Activated CD4-positive, alpha-beta T cell treated with anti-CD3 and anti-CD28 coated beads, Interleukin-2, amount 10 ng/mL, durations not matched to agents 24 days and 14 days (primary cell): ENCODE measurements at regions of chr12 and their contacts with region 1.

Region 1: DNA sequence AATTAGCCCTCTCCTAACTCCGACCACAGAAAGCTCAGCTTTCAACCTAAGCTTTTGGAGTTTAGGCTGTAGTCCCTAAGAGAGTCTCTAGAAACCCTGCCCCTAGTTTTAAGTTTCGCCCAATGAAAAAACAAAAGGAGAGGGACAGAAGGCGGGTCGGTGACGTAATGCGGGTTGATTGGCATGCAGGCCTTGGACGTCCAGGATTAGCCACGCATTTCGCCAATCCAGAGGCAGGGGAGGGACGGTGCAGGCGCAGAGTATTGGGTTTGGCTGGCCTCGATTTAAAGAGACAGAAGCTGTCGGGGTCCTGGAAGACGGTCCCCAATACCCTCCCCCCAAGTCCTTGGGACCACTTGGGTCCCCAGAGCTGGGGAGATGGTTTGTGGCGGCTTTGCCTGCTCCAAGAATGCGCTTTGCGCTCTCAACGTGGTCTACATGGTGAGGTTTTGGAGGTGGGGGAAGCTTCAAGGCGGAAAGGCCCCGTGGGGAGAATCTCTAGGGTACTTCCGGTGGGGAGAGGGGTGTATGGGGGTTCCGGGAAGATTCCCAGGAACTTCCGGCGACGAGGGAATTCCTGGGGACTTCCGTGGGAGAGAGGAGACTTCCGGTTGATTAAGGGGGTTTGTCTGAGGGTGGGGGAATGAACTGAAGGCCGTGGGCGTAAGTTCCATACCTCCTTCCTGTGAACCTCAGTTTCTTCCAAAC is at the start of gene TSPAN31:
- DNase-seq: peak; percentile 98
- H3K4me3 Mint-ChIP-seq: peak within 1 kb of the TSS; percentile 94
- H3K27ac Mint-ChIP-seq: peak within 1 kb of the TSS; percentile 90
- H3K4me1 Mint-ChIP-seq: peaks cover 45% of the 10 kb centered on the region
- H3K27me3 Mint-ChIP-seq: no peaks in the 10 kb centered on the region
- total RNA-seq, gene TSPAN31: 19.2 and 19.4 TPM in 2 replicates

Region 2: GRCh38 chr12:57069523-57069922 is 675.4 kb before region 1 on chr12:
- intact Hi-C with region 1: loop called (anchors 10 kb)
- DNase-seq: peak; percentile 90
- H3K4me3 Mint-ChIP-seq: peak overlapping the region; percentile 61
- H3K27ac Mint-ChIP-seq: peak overlapping the region; percentile 89
- H3K4me1 Mint-ChIP-seq: peaks cover 45% of the 10 kb centered on the region
- H3K27me3 Mint-ChIP-seq: no peaks in the 10 kb centered on the region

Region 3: GRCh38 chr12:57476162-57476992 is 268.6 kb before region 1 on chr12:
- intact Hi-C with region 1: loop called (anchors 5 kb)
- DNase-seq: peak; percentile 93
- H3K4me3 Mint-ChIP-seq: peak overlapping the region; percentile 96
- H3K27ac Mint-ChIP-seq: peak overlapping the region; percentile 97
- H3K4me1 Mint-ChIP-seq: peaks cover 68% of the 10 kb centered on the region
- H3K27me3 Mint-ChIP-seq: no peaks in the 10 kb centered on the region

Region 4: GRCh38 chr12:57583008-57583831 is 161.7 kb before region 1 on chr12:
- intact Hi-C with region 1: loop called (anchors 1 kb)
- DNase-seq: peak; percentile 92
- H3K4me3 Mint-ChIP-seq: no peak overlapping the region
- H3K27ac Mint-ChIP-seq: no peak overlapping the region
- H3K4me1 Mint-ChIP-seq: peaks cover 3% of the 10 kb centered on the region
- H3K27me3 Mint-ChIP-seq: peaks cover 10% of the 10 kb centered on the region

Region 5: DNA sequence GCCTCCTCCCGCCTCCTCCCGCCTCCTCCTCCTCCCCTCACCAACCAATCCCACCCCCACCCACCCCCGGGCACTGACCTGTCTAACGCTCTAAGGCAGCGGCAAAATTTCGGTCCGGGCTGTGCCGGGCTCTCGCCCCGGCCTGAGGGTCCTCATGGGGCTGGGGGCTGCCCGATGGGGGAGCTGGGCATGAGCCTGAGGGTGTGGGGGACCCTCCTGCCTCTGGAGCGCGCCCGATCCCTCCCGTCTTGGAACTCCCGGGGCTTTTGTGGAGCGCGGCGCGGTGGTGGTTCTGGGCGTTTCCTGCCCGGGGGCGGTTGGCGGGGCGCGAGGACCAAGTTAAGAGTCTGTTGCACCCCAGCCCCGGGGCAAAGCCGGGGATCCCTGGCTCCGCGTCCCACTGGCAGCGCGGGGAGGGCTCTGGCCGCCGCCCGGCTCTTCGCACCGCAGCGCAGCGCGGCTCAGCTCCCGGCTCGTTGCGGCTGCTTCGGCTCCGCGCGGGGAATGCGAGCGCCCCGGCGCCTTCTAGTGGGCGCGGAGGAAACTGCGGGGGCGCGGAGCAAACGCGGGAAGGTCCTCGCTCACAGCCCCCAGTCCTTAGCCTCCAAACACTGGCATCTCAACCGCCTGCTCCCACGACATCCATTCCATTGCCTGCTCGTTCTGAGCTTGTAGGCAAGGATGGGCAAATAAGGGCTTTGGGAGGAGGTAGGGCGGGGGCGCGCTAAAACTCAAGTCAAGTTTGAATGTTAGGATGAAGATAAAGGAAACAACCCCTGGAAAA is 112.0 kb before region 1 on chr12 and contains the start of gene B4GALNT1:
- intact Hi-C with region 1: loop called (anchors 2 kb)
- DNase-seq: peak; percentile 92
- H3K4me3 Mint-ChIP-seq: peak within 1 kb of the TSS; percentile 84
- H3K27ac Mint-ChIP-seq: no peak within 1 kb of the TSS
- H3K4me1 Mint-ChIP-seq: peaks cover 10% of the 10 kb centered on the region
- H3K27me3 Mint-ChIP-seq: peaks cover 59% of the 10 kb centered on the region
- total RNA-seq, gene B4GALNT1: 4.6 and 5.7 TPM in 2 replicates

Region 6: GRCh38 chr12:57941165-57941894 is 196.4 kb after region 1 on chr12 and contains the start of gene ATP23:
- intact Hi-C with region 1: no loop called
- DNase-seq: peak; percentile 97
- H3K4me3 Mint-ChIP-seq: peak within 1 kb of the TSS; percentile 91
- H3K27ac Mint-ChIP-seq: peak within 1 kb of the TSS; percentile 97
- H3K4me1 Mint-ChIP-seq: peaks cover 36% of the 10 kb centered on the region
- H3K27me3 Mint-ChIP-seq: no peaks in the 10 kb centered on the region
- total RNA-seq, gene ATP23: 8.3 and 10.7 TPM in 2 replicates